ENCODE measurements at regions of chr16 and their contacts with region 1.

Region 1: DNA sequence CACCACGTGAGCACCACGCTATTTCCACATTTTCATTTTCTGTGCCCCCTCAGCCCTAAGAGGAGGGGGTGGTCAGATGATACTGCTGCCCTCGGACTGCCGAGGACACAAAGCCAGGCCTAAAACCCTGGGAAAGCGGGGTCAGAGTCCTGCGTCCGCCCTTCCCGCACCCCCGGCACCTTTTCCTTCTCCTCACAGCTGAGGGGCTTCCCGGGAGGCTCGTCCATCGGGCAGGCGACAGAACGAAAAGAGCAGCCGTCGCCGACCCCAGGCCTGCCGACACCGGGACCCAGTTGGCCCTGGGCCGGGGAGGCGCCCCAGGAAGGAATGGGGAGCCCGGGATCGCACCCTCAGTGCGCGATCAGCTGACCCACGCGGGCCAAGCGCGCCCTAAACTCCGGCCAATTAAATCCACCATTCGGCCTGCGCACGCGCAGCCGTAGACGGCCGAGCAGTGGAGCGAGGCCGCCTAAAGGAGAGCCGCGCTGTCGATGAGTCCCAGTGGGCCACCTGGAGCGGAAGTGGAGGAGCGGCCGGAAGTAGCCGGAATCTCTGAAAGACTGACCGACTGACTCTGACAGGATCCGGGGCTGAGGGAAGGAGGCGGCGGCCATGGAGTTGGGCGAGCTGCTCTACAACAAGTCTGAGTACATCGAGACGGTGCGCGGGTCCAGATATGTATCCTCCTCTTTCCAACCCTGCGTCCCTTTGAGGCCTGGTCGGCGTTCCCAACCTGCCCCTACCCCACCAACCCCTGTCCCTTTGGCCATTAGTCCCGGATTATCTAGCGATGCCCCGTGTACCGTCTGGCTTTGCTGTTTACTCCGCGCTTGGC is at the starts of genes DCTN5 and PALB2:
- H3K4me3 Mint-ChIP-seq: peak within 1 kb of the TSS; percentile 92
- H3K27ac Mint-ChIP-seq: peak within 1 kb of the TSS; percentile 96
- H3K4me1 Mint-ChIP-seq: peaks cover 24% of the 10 kb centered on the region
- H3K27me3 Mint-ChIP-seq: no peaks in the 10 kb centered on the region

Region 2: DNA sequence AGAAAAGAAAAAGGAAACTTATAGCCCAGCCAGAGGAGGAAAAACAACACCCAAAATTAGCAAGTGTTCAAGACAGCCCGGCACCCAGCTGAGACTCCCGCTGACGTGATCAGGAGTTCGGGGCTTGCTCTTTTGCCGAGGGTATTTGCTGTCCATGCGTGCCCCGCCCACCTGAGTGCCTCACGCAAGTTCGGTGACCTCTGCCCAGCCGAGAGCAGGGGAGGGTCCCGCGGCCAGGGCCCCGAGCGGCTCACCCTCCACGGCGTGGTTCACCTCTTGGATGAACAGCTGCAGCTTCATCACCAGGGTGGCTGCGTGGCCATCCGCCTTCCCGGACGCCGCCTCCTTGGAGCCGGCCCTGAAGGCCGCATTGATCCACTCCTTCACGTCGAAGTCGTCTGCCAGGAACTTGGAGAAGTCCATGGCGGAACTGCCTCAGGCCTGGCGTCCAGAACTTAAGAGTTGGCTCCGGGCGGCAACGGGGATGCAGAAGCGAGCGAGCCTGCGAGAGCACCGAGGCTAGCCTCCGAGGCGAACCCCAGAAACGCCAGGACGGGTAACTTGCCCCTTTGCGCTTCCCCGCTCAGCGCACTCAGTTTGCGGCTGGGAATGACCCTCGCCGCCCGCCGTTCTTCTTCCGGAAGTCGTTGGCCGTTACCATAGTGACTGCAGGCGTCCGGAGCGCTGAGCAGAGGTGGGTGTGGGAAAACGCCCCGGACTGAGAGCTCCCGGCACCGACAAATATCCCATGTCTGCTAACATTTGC is 188.4 kb before region 1 on chr16 and contains the start of gene COG7:
- intact Hi-C with region 1: loop called (anchors 2 kb)
- H3K4me3 Mint-ChIP-seq: peak within 1 kb of the TSS; percentile 96
- H3K27ac Mint-ChIP-seq: peak within 1 kb of the TSS; percentile 89
- H3K4me1 Mint-ChIP-seq: peaks cover 40% of the 10 kb centered on the region
- H3K27me3 Mint-ChIP-seq: no peaks in the 10 kb centered on the region

Region 3: DNA sequence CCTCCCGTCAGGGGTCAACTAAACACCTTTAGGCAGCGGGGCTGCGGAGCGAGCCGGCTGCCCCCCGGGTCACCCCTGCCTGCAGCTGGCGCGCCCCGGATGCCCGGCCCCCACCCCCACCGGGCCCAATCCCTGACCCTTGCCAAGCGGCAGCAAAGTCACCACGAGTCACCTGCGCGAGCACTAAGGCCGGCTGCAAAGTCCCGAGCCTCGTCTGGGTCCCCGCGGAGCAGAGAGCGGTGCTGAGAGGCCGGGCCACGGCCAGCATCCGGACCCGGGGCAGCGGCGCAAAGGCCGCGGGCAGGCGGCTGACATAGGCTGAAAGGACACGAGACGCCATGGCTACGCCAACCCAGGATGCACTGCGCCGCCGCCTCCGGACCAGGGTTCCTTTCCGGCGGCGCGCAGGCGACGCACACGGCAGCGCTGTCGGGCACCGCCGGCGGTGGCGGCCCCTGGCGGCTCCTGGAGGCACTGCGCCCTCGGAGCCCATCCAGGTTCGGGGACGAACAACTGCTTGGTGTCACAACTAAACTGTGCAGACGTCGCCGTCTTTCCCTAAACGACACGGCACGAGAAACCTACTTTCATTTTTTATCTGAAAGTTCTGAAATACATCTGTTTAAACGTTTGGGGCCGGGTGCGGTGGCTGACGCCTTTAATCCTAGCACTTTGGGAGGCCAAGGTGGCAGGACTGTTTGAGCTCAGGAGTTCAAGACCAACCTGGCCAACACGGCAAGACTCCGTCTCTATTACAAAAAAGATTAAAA is 45.0 kb before region 1 on chr16 and contains the start of gene NDUFAB1:
- intact Hi-C with region 1: loop called (anchors 2 kb)
- H3K4me3 Mint-ChIP-seq: peak within 1 kb of the TSS; percentile 81
- H3K27ac Mint-ChIP-seq: peak within 1 kb of the TSS; percentile 80
- H3K4me1 Mint-ChIP-seq: peaks cover 31% of the 10 kb centered on the region
- H3K27me3 Mint-ChIP-seq: no peaks in the 10 kb centered on the region

Measured in dendritic cell treated with granulocyte-macrophage colony-stimulating factor and Interleukin-4, amounts not matched to agents 40 ng/mL and 50 ng/mL, for 4 days (primary cell).